ENCODE measurements at regions of chr5 and their contacts with region 1.

Region 1: GRCh38 chr5:96868603-96869371 is 7.5 kb upstream of the ERAP2 start:
- DNase-seq: no peak
- H3K4me3 Mint-ChIP-seq: no peak overlapping the region
- H3K27ac Mint-ChIP-seq: peak overlapping the region; percentile 47
- H3K4me1 Mint-ChIP-seq: peaks cover 57% of the 10 kb centered on the region
- H3K27me3 Mint-ChIP-seq: no peaks in the 10 kb centered on the region

Region 2: GRCh38 chr5:96807075-96807654 is 61.6 kb before region 1 on chr5:
- intact Hi-C with region 1: loop called (anchors 1 kb)
- DNase-seq: no peak
- H3K4me3 Mint-ChIP-seq: peak overlapping the region; percentile 99
- H3K27ac Mint-ChIP-seq: peak overlapping the region; percentile 95
- H3K4me1 Mint-ChIP-seq: peaks cover 81% of the 10 kb centered on the region
- H3K27me3 Mint-ChIP-seq: no peaks in the 10 kb centered on the region

Region 3: DNA sequence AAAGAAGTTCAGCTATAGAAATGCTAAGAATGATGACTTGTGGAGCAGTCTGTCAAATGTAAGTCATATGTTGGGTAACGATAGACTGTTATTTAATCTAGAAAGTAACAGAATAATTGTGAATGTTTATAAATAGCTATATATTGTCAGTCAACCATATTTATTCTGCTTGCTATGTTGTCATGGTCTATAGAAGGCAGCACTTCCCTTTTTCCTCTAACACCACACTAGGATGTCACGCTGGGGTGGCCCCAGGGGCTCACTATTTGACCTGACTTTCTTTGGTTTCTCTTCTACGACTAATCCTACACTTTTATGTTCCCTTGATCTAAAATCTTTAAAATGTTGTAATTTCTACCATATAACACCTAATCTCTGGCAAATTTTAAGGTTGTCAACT is 28.0 kb after region 1 on chr5:
- intact Hi-C with region 1: loop called (anchors 1 kb)
- DNase-seq: no peak
- H3K4me3 Mint-ChIP-seq: peak overlapping the region; percentile 84
- H3K27ac Mint-ChIP-seq: peak overlapping the region; percentile 96
- H3K4me1 Mint-ChIP-seq: peaks cover 62% of the 10 kb centered on the region
- H3K27me3 Mint-ChIP-seq: no peaks in the 10 kb centered on the region

Region 4: GRCh38 chr5:96957254-96958049 is 88.7 kb after region 1 on chr5:
- intact Hi-C with region 1: loop called (anchors 1 kb)
- DNase-seq: no peak
- H3K4me3 Mint-ChIP-seq: peak overlapping the region; percentile 63
- H3K27ac Mint-ChIP-seq: peak overlapping the region; percentile 65
- H3K4me1 Mint-ChIP-seq: peaks cover 71% of the 10 kb centered on the region
- H3K27me3 Mint-ChIP-seq: no peaks in the 10 kb centered on the region

Region 5: GRCh38 chr5:97004423-97005060 is 135.8 kb after region 1 on chr5:
- intact Hi-C with region 1: loop called (anchors 2 kb)
- DNase-seq: no peak
- H3K4me3 Mint-ChIP-seq: no peak overlapping the region
- H3K27ac Mint-ChIP-seq: peak overlapping the region; percentile 32
- H3K4me1 Mint-ChIP-seq: peaks cover 15% of the 10 kb centered on the region
- H3K27me3 Mint-ChIP-seq: no peaks in the 10 kb centered on the region

Region 6: DNA sequence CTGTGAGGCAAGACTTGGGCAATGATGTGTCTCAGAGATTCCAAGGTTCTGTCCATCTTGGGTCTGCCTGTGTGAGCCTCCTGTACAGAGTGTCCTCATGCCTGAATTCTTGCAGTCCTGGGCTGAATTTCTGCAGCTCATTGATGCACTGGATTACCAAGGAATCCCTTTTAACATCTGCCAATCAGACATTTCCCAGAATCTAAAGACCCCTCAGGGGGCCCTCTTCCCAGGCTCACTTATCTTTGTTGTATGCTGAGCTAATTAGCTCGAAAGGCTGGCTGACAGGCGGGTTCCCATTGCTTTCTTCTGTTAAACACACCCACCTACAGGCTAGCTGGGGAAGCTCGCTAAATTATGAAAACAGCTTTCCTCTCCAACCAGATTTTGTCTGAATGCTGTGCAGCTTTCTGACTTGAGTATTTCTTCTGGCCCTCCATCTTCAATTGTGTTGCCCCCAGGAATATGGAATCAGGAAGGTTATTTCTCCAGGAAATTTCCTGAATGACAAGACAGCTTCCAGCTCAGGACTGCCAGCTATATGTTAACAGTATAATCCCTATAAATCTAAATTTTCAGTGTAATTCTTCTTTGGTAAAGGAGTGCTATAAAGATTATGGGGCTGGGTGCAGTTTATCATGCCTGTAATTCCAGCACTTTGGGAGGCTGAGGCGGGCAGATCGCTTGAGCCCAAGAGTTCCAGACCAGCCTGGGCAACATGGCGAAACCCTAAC is 273.9 kb after region 1 on chr5 and contains the start of gene LIX1:
- intact Hi-C with region 1: loop called (anchors 1 kb)
- DNase-seq: no peak
- H3K4me3 Mint-ChIP-seq: no peak within 1 kb of the TSS
- H3K27ac Mint-ChIP-seq: no peak within 1 kb of the TSS
- H3K4me1 Mint-ChIP-seq: peaks cover 7% of the 10 kb centered on the region
- H3K27me3 Mint-ChIP-seq: peaks cover 28% of the 10 kb centered on the region
- total RNA-seq, gene LIX1: not detected in 2 replicates